IMR-90 (cell line): ENCODE measurements at regions of chr19 and their contacts with region 1.

Region 1: GRCh38 chr19:15091901-15092753 is 10.1 kb downstream of the OR1I1 start:
- DNase-seq: peak; percentile 71
- ATAC-seq: peak; percentile 75
- H3K4me3 ChIP-seq: no peak overlapping the region
- H3K27ac ChIP-seq: no peak overlapping the region
- H3K4me1 ChIP-seq: peaks cover 3% of the 10 kb centered on the region; the same call in 1 of the 2 replicates
- H3K27me3 ChIP-seq: peaks cover 11% of the 10 kb centered on the region
- CTCF ChIP-seq: peak; percentile 79
- POLR2A ChIP-seq: no peak
- RAD21 ChIP-seq: peak; percentile 72

Region 2: DNA sequence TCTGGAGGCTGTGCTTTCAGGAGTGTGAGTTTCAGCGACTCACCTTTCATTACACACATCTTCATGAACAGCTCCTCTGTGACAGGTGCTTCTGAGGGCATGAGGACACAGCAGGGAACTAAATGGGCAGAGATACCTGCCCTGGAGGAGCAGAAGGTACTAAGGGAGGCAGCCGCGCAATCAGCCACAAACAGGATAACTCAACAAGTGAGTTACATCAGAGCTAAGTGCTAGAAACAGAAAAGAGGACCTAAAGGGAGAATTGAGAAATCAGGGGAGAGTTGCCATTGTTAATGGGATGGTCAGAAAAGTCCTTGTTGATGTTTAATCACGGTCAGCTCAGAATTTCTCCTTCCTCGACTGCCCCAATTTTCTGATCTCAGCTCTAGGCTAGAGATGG is 57.6 kb after region 1 on chr19:
- CTCF ChIA-PET with region 1: interaction called, 10 read pairs
- POLR2A ChIA-PET with region 1: no interaction called
- dilution Hi-C with region 1: no loop called
- in situ Hi-C with region 1: no loop called
- intact Hi-C with region 1: loop called (anchors 1 kb)
- DNase-seq: no peak
- ATAC-seq: no peak
- H3K4me3 ChIP-seq: no peak overlapping the region
- H3K27ac ChIP-seq: no peak overlapping the region
- H3K4me1 ChIP-seq: peaks cover 1% of the 10 kb centered on the region; the same call in 1 of the 2 replicates
- H3K27me3 ChIP-seq: peaks cover 6% of the 10 kb centered on the region; the same call in 1 of the 2 replicates
- CTCF ChIP-seq: no peak
- POLR2A ChIP-seq: no peak
- RAD21 ChIP-seq: no peak

Region 3: DNA sequence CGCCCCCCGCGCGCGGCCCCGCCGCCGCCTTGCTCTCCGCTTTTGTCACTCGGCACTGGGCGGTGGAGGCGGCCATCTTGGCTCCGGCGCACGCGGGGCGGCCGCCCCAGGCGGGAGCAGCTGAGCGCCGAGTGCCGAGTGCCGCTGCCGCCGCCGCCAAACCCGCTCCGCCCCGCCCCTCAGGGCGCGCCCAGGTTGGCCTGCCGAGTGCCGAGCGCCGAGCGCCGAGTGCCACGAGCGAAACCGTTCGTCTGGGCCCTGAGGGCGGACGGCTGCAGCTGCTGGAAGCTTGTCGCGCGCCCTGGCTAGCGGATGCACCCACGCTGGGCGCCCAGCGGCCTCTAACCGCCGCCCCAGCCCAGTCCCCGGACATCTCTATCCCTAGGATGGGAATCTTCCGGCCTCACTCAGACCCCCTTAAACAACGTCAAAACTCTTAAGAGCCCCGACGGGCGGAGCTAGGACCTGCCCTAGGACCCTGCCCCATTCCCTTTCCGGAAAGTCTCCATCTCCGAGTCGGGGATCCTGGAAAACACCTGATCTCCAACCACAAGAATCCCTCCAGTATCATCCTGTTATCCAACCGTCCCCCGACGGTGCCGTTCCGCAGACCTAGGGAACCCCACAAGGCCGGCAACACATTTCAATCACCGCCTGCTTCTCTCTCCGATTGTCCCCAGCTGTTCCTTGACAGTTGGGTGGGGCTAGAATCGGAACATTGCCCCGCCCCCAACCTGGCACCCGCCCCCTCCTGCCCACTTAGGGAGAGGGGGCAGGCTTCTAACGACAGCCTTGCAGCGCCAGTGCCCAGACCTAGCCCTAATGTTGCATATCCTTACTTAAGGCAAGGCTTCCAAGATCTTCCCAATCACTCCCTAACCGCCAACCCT is 340.7 kb after region 1 on chr19:
- CTCF ChIA-PET with region 1: no interaction called
- POLR2A ChIA-PET with region 1: no interaction called
- dilution Hi-C with region 1: no loop called
- in situ Hi-C with region 1: no loop called
- intact Hi-C with region 1: loop called (anchors 5 kb)
- DNase-seq: peak; percentile 87
- ATAC-seq: peak; percentile 94
- H3K4me3 ChIP-seq: peak overlapping the region; percentile 51
- H3K27ac ChIP-seq: peak overlapping the region; percentile 48
- H3K4me1 ChIP-seq: peaks cover 30% of the 10 kb centered on the region
- H3K27me3 ChIP-seq: no peaks in the 10 kb centered on the region
- CTCF ChIP-seq: no peak
- POLR2A ChIP-seq: peak; percentile 61; the same call in 1 of the 2 replicates
- RAD21 ChIP-seq: no peak; the same call in 1 of the 2 replicates